MCF 10A (cell line): ENCODE measurements at regions of chr16 and their contacts with region 1.

Region 1: DNA sequence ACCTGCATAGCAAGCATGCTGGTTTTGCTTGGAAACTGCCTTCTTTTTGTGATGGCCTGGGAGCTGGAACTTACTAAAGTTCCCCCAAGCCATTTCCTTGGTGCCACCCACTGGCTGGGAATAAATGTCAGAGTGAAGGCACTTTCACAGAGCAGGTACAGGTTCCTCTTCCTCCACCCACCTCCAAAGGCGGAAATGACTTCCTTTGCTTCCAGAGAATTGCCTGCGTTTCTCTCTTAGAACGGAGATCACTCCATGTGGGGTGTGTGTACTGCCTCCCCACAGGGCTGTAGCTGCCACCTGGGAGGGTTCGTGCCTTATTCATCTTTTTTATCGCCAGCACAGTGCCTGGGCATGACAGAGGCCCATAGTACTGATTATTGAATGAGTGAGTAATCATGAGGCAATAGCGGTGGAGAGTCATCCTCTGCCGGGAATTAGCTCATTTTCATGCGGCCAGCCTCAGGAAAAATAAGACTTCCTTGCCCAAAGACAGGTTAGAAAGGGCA is 32.2 kb upstream of the HAS3 start:
- DNase-seq: peak; percentile 96
- H3K4me3 Mint-ChIP-seq: peak overlapping the region; percentile 30
- H3K27ac Mint-ChIP-seq: peak overlapping the region; percentile 90
- H3K4me1 Mint-ChIP-seq: peaks cover 26% of the 10 kb centered on the region
- H3K27me3 Mint-ChIP-seq: no peaks in the 10 kb centered on the region
- CTCF ChIP-seq: no peak

Region 2: GRCh38 chr16:68921654-68922053 is 151.6 kb before region 1 on chr16:
- CTCF ChIA-PET with region 1: interaction called, 4 read pairs
- POLR2A ChIA-PET with region 1: interaction called, 7 read pairs
- intact Hi-C with region 1: loop called (anchors 10 kb)
- DNase-seq: peak; percentile 89
- H3K4me3 Mint-ChIP-seq: peak overlapping the region; percentile 3
- H3K27ac Mint-ChIP-seq: peak overlapping the region; percentile 95
- H3K4me1 Mint-ChIP-seq: peaks cover 23% of the 10 kb centered on the region
- H3K27me3 Mint-ChIP-seq: no peaks in the 10 kb centered on the region
- CTCF ChIP-seq: no peak

Region 3: GRCh38 chr16:69057400-69058378 is 15.5 kb before region 1 on chr16:
- CTCF ChIA-PET with region 1: interaction called, 4 read pairs
- POLR2A ChIA-PET with region 1: interaction called, 16 read pairs
- intact Hi-C with region 1: loop called (anchors 1 kb)
- DNase-seq: peak; percentile 95
- H3K4me3 Mint-ChIP-seq: no peak overlapping the region
- H3K27ac Mint-ChIP-seq: peak overlapping the region; percentile 77
- H3K4me1 Mint-ChIP-seq: peaks cover 12% of the 10 kb centered on the region
- H3K27me3 Mint-ChIP-seq: no peaks in the 10 kb centered on the region
- CTCF ChIP-seq: no peak